ENCODE measurements at regions of chr2 and their contacts with region 1.

Region 1: DNA sequence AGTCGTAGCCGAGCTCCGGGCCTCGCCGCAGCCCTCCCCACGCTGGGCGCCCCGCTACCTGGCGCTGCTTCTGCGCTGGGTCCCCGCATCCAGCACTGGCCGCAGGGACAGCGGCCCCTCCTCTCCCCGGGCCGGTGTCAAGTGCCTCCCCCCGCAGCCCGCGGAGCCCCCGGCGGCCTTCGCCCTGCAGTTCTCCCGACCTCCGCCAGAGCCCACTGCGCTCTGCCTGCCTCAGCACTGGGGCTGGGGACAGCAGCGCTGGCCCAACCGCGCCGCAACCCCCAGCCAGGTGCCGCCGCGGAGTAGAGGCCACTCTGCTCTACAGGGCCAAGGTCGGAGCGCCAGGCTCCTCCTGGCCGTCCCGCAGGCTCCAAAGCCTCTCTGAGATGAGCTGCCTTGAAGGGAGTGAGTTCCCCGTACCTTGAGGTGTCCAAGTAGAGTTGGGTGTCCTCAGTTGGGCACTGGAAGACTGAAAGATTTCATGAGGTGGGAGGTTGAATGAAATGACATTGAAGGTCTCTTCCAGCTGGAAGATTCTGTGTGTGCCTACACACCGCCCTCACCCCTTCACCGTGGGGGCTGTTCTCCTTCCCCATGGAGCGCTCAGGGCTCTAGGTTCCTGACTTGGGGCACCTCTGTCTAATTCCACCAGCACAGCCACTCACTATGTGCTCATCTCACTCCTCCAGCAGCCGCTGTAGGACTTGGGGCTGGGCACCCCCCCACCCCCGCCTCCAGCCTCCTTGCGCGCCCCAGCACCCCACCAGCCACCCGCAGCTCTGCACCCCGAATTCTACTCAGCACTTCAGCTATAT is 854 bp upstream of the DNMT3A start:
- DNase-seq: peak; percentile 74 to 88 (median 82)
- ATAC-seq: peak; percentile 80 to 87
- H3K4me3 Mint-ChIP-seq: peak overlapping the region; percentile 70 to 90 (median 81)
- H3K27ac Mint-ChIP-seq: peak overlapping the region in 6 of 10 donors; percentile 37 to 90 (median 81)
- H3K4me1 Mint-ChIP-seq: peaks cover 14 to 40% (median 28%) of the 10 kb centered on the region in 4 donors
- H3K27me3 Mint-ChIP-seq: no peaks in the 10 kb centered on the region

Region 2: GRCh38 chr2:25314514-25315315 is 27.9 kb before region 1 on chr2:
- POLR2A ChIA-PET with region 1: interaction called, 69 read pairs
- DNase-seq: peak in 9 of 10 donors; percentile 39 to 78 (median 63)
- ATAC-seq: peak; percentile 83 to 88
- H3K4me3 Mint-ChIP-seq: peak overlapping the region; percentile 45 to 85 (median 79)
- H3K27ac Mint-ChIP-seq: peak overlapping the region; percentile 87 to 96 (median 93)
- H3K4me1 Mint-ChIP-seq: peaks cover 32 to 83% (median 72%) of the 10 kb centered on the region in 4 donors
- H3K27me3 Mint-ChIP-seq: no peaks in the 10 kb centered on the region

Region 3: DNA sequence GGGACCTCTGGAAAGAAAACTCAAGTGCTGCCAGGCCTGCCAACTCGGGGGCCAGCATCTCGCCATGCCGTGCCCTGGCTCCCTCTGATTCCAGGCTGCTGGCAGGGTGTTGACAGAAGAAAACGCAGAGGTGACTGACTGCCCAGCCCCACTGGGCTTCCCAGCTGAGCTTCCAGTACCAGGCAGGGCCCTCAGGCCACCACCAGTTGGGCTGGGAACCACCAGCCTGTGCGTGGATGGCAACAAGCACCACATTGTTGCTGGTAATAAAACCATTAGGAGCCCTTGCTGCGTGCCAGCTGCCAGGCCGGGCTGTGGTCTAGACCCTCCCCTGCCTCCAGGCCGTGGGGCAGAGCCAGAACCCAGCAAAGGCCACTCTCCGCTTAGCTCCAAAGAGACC is 10.0 kb before region 1 on chr2:
- POLR2A ChIA-PET with region 1: interaction called, 10 read pairs
- DNase-seq: no peak
- ATAC-seq: no peak
- H3K4me3 Mint-ChIP-seq: peak overlapping the region in 5 of 10 donors; percentile 13 to 80 (median 29)
- H3K27ac Mint-ChIP-seq: peak overlapping the region; percentile 13 to 94 (median 78)
- H3K4me1 Mint-ChIP-seq: peaks cover 56 to 90% (median 83%) of the 10 kb centered on the region in 4 donors
- H3K27me3 Mint-ChIP-seq: no peaks in the 10 kb centered on the region

Region 4: GRCh38 chr2:25362049-25362433 is 19.5 kb after region 1 on chr2:
- POLR2A ChIA-PET with region 1: interaction called, 11 read pairs
- DNase-seq: peak; percentile 85 to 99 (median 93)
- ATAC-seq: peak; percentile 89 to 97
- H3K4me3 Mint-ChIP-seq: peak overlapping the region; percentile 89 to 99 (median 94)
- H3K27ac Mint-ChIP-seq: peak overlapping the region; percentile 85 to 100 (median 94)
- H3K4me1 Mint-ChIP-seq: peaks cover 11 to 21% (median 19%) of the 10 kb centered on the region in 4 donors
- H3K27me3 Mint-ChIP-seq: no peaks in the 10 kb centered on the region

Region 5: GRCh38 chr2:25376750-25377621 is 34.4 kb after region 1 on chr2:
- POLR2A ChIA-PET with region 1: interaction called, 13 read pairs
- DNase-seq: peak; percentile 87 to 95 (median 91)
- ATAC-seq: peak; percentile 98 to 99
- H3K4me3 Mint-ChIP-seq: peak overlapping the region; percentile 69 to 85 (median 80)
- H3K27ac Mint-ChIP-seq: peak overlapping the region; percentile 92 to 98 (median 94)
- H3K4me1 Mint-ChIP-seq: peaks cover 17 to 43% (median 39%) of the 10 kb centered on the region in 4 donors
- H3K27me3 Mint-ChIP-seq: no peaks in the 10 kb centered on the region

Measured in naive thymus-derived CD8-positive, alpha-beta T cell (primary cell).